Activated naive CD4-positive, alpha-beta T cell treated with anti-CD3 and anti-CD28 coated beads for 36 hours (primary cell): ENCODE measurements at regions of chr11 and their contacts with region 1.

Region 1: GRCh38 chr11:66268283-66268951 is at the start of gene RAB1B:
- DNase-seq: peak; percentile 100
- H3K4me3 Mint-ChIP-seq: peak within 1 kb of the TSS; percentile 95
- H3K27ac Mint-ChIP-seq: peak within 1 kb of the TSS; percentile 95
- H3K4me1 Mint-ChIP-seq: peaks cover 26% of the 10 kb centered on the region
- H3K27me3 Mint-ChIP-seq: no peaks in the 10 kb centered on the region
- total RNA-seq, gene RAB1B: 112 to 115 TPM

Region 2: GRCh38 chr11:65711785-65712632 is 556.4 kb before region 1 on chr11 and contains the start of gene KAT5:
- CTCF ChIA-PET with region 1: no interaction called
- intact Hi-C with region 1: loop called (anchors 5 kb)
- DNase-seq: peak; percentile 100
- H3K4me3 Mint-ChIP-seq: peak within 1 kb of the TSS; percentile 95
- H3K27ac Mint-ChIP-seq: peak within 1 kb of the TSS; percentile 97
- H3K4me1 Mint-ChIP-seq: peaks cover 33% of the 10 kb centered on the region
- H3K27me3 Mint-ChIP-seq: no peaks in the 10 kb centered on the region
- total RNA-seq, gene KAT5: 60.1 to 67.1 TPM

Region 3: GRCh38 chr11:66001942-66002647 is 266.3 kb before region 1 on chr11 and contains the starts of genes BANF1 and EIF1AD:
- CTCF ChIA-PET with region 1: no interaction called
- intact Hi-C with region 1: loop called (anchors 1 kb)
- DNase-seq: peak; percentile 96
- H3K4me3 Mint-ChIP-seq: peak within 1 kb of the TSS; percentile 99
- H3K27ac Mint-ChIP-seq: peak within 1 kb of the TSS; percentile 99
- H3K4me1 Mint-ChIP-seq: peaks cover 44% of the 10 kb centered on the region
- H3K27me3 Mint-ChIP-seq: no peaks in the 10 kb centered on the region
- total RNA-seq, gene BANF1: 347 to 369 TPM
- total RNA-seq, gene EIF1AD: 31.2 to 31.7 TPM

Region 4: DNA sequence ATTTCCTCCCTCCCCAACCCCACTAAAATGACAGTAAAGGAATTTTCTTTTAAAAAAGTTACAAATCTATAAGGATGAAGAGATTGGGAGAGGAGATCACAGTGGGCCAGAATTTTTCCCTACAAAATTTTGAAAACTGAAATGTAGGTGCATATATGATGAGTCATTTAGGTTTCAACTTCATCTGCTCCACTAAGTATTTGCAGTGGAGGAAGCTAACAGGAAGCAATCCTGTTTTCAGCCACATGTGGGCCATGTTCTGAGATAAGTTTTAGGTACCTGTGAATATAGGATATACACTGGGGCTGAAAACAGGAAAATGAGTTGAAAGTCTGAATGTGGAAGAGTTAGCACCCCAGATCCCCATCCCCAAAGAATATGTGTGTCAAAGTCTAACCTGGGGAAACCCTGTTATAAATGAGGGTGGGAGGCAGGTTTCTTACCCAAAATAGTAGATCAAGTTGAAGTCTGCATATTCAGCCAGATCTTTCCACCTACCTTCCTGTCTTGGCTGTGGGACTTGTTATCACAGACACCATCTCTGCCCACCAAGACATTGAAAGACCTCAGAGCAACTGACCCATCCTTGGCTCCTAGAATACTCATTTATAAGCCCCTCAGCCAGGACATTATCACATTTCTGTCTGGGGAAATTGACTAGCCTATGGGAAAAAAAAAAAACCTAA is 111.1 kb before region 1 on chr11:
- CTCF ChIA-PET with region 1: no interaction called
- intact Hi-C with region 1: no loop called
- DNase-seq: peak; percentile 19
- H3K4me3 Mint-ChIP-seq: no peak overlapping the region
- H3K27ac Mint-ChIP-seq: peak overlapping the region; percentile 64
- H3K4me1 Mint-ChIP-seq: peaks cover 44% of the 10 kb centered on the region
- H3K27me3 Mint-ChIP-seq: no peaks in the 10 kb centered on the region

Region 5: GRCh38 chr11:66282468-66283386 is 14.3 kb after region 1 on chr11:
- CTCF ChIA-PET with region 1: interaction called, 19 read pairs
- intact Hi-C with region 1: loop called (anchors 1 kb)
- DNase-seq: peak; percentile 99
- H3K4me3 Mint-ChIP-seq: no peak overlapping the region
- H3K27ac Mint-ChIP-seq: peak overlapping the region; percentile 59
- H3K4me1 Mint-ChIP-seq: peaks cover 28% of the 10 kb centered on the region
- H3K27me3 Mint-ChIP-seq: no peaks in the 10 kb centered on the region

Region 6: GRCh38 chr11:66311965-66312548 is 43.6 kb after region 1 on chr11:
- CTCF ChIA-PET with region 1: no interaction called
- intact Hi-C with region 1: loop called (anchors 1 kb)
- DNase-seq: peak; percentile 96
- H3K4me3 Mint-ChIP-seq: peak overlapping the region; percentile 92
- H3K27ac Mint-ChIP-seq: peak overlapping the region; percentile 93
- H3K4me1 Mint-ChIP-seq: peaks cover 33% of the 10 kb centered on the region
- H3K27me3 Mint-ChIP-seq: no peaks in the 10 kb centered on the region